MCF 10A (cell line): ENCODE measurements at regions of chr14 and their contacts with region 1.

Region 1: DNA sequence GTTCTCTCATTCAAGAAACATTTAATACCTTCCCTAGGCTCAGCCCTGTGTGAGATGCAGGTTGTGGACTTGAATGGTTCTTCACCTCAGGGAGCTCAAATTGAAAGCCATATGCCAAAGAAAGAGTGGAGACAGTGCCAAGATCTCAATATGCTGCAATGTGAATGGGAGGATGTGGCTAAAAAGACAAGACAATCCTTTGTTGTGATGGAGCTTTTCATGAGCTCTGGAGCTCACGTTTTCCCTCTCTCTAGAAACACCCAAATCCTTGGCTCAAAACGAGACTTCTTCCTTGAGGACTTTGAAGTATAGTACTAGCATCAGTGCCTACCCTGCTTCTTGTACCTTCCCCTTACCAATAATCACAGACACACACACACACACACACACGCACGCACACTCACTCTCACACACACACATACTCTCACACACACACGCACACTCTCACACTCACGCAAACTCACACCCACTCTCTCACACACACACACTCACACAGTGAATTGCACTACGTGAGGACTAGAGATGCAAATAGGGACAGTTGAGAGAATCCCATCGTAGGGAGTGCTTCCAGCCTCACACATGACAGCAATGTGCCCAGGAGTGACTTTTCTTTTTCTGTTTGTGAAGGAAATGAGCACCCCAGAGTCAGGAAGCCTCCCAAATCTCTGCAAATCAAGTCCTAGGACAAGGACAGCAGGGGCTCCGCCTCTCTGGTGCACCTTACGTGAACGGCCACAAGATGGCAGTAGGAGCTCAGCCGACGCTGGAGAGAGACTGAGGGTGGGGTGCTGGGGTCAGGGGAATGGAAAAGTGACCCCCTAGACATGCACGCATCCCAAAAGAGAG is 231.4 kb downstream of the PCNX1 start:
- DNase-seq: peak; percentile 62
- H3K4me3 Mint-ChIP-seq: no peak overlapping the region
- H3K27ac Mint-ChIP-seq: no peak overlapping the region
- H3K4me1 Mint-ChIP-seq: peaks cover 13% of the 10 kb centered on the region
- H3K27me3 Mint-ChIP-seq: no peaks in the 10 kb centered on the region
- CTCF ChIP-seq: peak; percentile 96

Region 2: GRCh38 chr14:70289138-70289537 is 849.5 kb before region 1 on chr14:
- CTCF ChIA-PET with region 1: no interaction called
- POLR2A ChIA-PET with region 1: no interaction called
- intact Hi-C with region 1: no loop called
- DNase-seq: no peak
- H3K4me3 Mint-ChIP-seq: no peak overlapping the region
- H3K27ac Mint-ChIP-seq: no peak overlapping the region
- H3K4me1 Mint-ChIP-seq: no peaks in the 10 kb centered on the region
- H3K27me3 Mint-ChIP-seq: peaks cover 17% of the 10 kb centered on the region
- CTCF ChIP-seq: no peak

Region 3: DNA sequence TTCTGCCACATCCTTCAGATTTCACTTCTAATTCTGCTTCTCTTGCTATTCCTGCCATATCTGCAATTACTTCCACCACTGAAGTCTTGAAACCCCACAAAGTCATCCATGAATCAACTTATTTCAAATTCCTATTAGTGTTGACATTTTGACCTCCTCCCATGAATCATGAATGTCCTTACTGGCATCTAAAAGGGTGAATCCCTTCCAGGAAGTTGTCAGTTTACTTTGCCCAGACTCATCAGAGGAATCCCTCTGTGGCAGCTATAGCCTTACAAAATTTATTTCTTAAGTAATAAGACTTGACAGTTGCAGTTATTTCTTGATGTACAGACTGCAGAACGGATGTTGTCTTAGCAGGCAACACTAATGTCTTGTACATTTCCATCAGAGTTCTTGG is 68.5 kb before region 1 on chr14:
- CTCF ChIA-PET with region 1: no interaction called
- POLR2A ChIA-PET with region 1: no interaction called
- intact Hi-C with region 1: no loop called
- DNase-seq: peak; percentile 53
- H3K4me3 Mint-ChIP-seq: no peak overlapping the region
- H3K27ac Mint-ChIP-seq: no peak overlapping the region
- H3K4me1 Mint-ChIP-seq: peaks cover 6% of the 10 kb centered on the region
- H3K27me3 Mint-ChIP-seq: no peaks in the 10 kb centered on the region
- CTCF ChIP-seq: no peak

Region 4: GRCh38 chr14:71403656-71404055 is 265.0 kb after region 1 on chr14:
- CTCF ChIA-PET with region 1: interaction called, 8 read pairs
- POLR2A ChIA-PET with region 1: no interaction called
- intact Hi-C with region 1: loop called (anchors 2 kb)
- DNase-seq: peak; percentile 42
- H3K4me3 Mint-ChIP-seq: no peak overlapping the region
- H3K27ac Mint-ChIP-seq: no peak overlapping the region
- H3K4me1 Mint-ChIP-seq: no peaks in the 10 kb centered on the region
- H3K27me3 Mint-ChIP-seq: no peaks in the 10 kb centered on the region
- CTCF ChIP-seq: peak; percentile 18